GM10248 (cell line): ENCODE measurements at regions of chr1 and their contacts with region 1.

Region 1: GRCh38 chr1:231534703-231535159 is 6.3 kb downstream of the TSNAX start:
- DNase-seq: no peak
- CTCF ChIP-seq: no peak

Region 2: DNA sequence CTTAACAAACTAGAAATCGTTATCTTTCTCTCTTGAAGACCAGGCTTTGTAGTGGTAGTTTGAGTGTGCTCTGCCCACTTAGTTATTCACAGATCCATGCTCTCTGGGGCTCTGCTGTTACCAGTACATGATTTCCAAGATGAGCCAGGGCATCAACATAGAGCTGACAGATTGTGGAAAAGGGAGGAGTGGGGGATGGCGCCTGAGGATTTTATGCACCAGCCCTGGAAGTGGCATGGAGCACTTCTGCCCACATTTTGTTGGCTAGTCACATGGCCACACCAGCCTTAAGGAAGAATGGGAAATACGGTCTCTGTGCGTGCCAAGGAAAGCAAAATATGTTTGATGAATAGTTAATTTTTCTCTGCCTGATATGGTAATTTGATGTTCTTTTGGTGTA is 12.0 kb after region 1 on chr1:
- CTCF ChIA-PET with region 1: interaction called, 16 read pairs
- POLR2A ChIA-PET with region 1: no interaction called
- DNase-seq: no peak
- CTCF ChIP-seq: no peak